K562 (cell line): ENCODE measurements at regions of chr2 and their contacts with region 1.

Region 1: GRCh38 chr2:197168705-197169104 is 141.9 kb downstream of the ANKRD44 start:
- DNase-seq: peak; percentile 38 to 62 (median 44)
- ATAC-seq: peak; percentile 93
- H3K4me3 ChIP-seq: no peak overlapping the region
- H3K27ac ChIP-seq: no peak overlapping the region
- H3K4me1 ChIP-seq: peaks cover 0 to 7% of the 10 kb centered on the region in 2 experiments; a peak in 2 of 5 replicates
- H3K27me3 ChIP-seq: peaks cover 2 to 17% of the 10 kb centered on the region in 2 experiments; a peak in 3 of 5 replicates
- CTCF ChIP-seq: peak; percentile 56 to 62 (median 61); a peak in 5 of 6 replicates
- EP300 ChIP-seq: no peak
- POLR2A ChIP-seq: no peak
- RAD21 ChIP-seq: peak; percentile 45 to 56

Region 2: DNA sequence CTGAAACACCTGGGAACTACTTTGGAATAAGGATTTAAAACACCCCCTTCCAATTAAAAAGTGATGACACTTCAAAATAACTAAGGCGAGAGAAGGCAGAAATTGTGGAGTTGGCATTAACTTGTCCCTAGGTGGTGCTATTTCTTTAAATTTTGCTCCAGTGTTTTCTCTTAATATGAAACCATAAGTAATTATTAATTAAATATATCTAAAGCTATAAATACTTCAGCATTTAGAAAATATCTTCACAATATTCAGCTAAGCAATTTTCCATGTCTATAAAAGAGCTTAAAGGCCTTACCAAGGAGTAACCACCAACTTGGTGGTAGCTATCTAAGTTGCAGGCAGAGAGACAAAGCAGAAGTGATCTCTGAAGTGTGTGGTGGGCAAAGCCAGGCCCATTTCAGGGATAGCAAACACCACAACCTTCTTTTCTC is 55.4 kb before region 1 on chr2:
- CTCF ChIA-PET with region 1: interaction called, 3 read pairs
- POLR2A ChIA-PET with region 1: no interaction called
- in situ Hi-C with region 1: no loop called
- intact Hi-C with region 1: loop called (anchors 1 kb)
- DNase-seq: peak; percentile 7 to 11 (median 9)
- ATAC-seq: no peak
- H3K4me3 ChIP-seq: no peak overlapping the region
- H3K27ac ChIP-seq: no peak overlapping the region
- H3K4me1 ChIP-seq: no peaks in the 10 kb centered on the region
- H3K27me3 ChIP-seq: no peaks in the 10 kb centered on the region
- CTCF ChIP-seq: peak in 2 of 3 experiments; percentile 24 to 65; a peak in 4 of 6 replicates
- EP300 ChIP-seq: no peak
- POLR2A ChIP-seq: no peak
- RAD21 ChIP-seq: peak; percentile 53 to 62